ENCODE measurements at regions of chr3 and their contacts with region 1.

Region 1: DNA sequence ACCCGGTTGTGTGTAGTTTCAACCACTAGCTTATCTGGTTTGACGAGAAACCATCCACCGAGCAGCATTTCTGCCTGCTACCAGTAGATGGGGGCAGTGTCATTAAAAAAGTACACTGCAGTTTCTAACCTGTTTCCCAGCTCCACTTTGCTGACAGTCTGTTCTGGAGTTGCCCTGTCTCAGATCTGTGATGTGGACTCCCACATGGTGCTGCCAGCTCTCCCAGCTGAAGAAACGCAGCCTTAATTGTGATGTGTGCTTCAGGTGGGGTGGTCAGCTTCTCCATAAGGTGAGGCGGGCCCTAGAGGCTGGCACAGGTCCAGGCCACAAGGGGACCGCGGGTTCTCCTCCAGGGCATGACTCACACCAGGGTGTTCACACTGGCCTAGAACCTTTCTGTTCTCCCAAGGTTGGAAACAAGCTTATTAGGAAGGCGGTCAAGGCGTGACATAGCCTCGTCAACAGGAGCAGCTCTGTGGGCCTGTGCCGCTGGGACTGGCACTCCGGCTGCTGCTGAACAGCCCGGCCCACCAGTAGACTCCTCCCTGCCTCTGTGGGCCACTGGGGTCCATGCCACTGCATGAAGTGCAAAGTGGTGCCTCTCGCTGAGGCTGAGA is 2.9 kb upstream of the FAM43A start:
- DNase-seq: peak; percentile 81
- H3K4me3 ChIP-seq: peak overlapping the region in 1 of 2 experiments; percentile 25; a peak in 1 of 4 replicates
- H3K27ac ChIP-seq: peak overlapping the region in 1 of 2 experiments; percentile 26; a peak in 1 of 4 replicates
- H3K4me1 ChIP-seq: peaks cover 5 to 28% of the 10 kb centered on the region in 2 experiments; a peak in 1 of 4 replicates
- H3K27me3 ChIP-seq: no peaks in the 10 kb centered on the region
- CTCF ChIP-seq: peak; percentile 93
- EP300 ChIP-seq: no peak
- RAD21 ChIP-seq: peak; percentile 100

Region 2: DNA sequence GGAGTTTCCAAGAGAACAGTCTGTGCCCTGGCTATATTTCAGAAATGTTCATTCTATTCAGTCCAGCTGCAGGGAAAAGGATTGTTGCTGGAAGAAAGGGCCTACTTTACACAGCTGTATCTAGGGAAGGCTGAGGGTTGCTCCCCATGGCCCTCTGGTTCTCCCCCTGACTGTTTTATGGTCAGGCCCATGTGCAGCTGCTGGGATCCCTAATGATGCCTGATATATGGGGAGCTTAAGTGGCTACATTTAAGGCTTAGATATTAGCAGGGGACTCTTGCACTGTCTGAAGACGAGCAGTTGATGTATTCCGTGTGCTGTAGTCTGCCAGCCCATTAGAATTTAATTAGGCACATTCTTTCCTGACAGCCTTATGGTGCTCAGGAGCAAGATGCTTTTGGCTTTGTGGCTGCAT is 74.9 kb after region 1 on chr3:
- CTCF ChIA-PET with region 1: interaction called, 10 read pairs
- POLR2A ChIA-PET with region 1: no interaction called
- DNase-seq: peak; percentile 44
- H3K4me3 ChIP-seq: no peak overlapping the region
- H3K27ac ChIP-seq: peak overlapping the region in 1 of 2 experiments; percentile 68; a peak in 2 of 4 replicates
- H3K4me1 ChIP-seq: peaks cover 0 to 37% of the 10 kb centered on the region in 2 experiments; a peak in 2 of 4 replicates
- H3K27me3 ChIP-seq: peaks cover 10% of the 10 kb centered on the region; the same call in 1 of the 2 replicates
- CTCF ChIP-seq: no peak
- EP300 ChIP-seq: 0 out of 4 replicates have a peak, but pooled peaks of 1 of the 2 experiments have one; percentile 10
- RAD21 ChIP-seq: no peak

Region 3: GRCh38 chr3:195094171-195094921 is 411.5 kb after region 1 on chr3:
- CTCF ChIA-PET with region 1: interaction called, 10 read pairs
- POLR2A ChIA-PET with region 1: no interaction called
- DNase-seq: no peak
- H3K4me3 ChIP-seq: no peak overlapping the region
- H3K27ac ChIP-seq: no peak overlapping the region; a peak in 1 of 4 replicates
- H3K4me1 ChIP-seq: peaks cover 0 to 36% of the 10 kb centered on the region in 2 experiments; a peak in 1 of 4 replicates
- H3K27me3 ChIP-seq: no peaks in the 10 kb centered on the region
- CTCF ChIP-seq: no peak
- EP300 ChIP-seq: no peak
- RAD21 ChIP-seq: no peak

Region 4: DNA sequence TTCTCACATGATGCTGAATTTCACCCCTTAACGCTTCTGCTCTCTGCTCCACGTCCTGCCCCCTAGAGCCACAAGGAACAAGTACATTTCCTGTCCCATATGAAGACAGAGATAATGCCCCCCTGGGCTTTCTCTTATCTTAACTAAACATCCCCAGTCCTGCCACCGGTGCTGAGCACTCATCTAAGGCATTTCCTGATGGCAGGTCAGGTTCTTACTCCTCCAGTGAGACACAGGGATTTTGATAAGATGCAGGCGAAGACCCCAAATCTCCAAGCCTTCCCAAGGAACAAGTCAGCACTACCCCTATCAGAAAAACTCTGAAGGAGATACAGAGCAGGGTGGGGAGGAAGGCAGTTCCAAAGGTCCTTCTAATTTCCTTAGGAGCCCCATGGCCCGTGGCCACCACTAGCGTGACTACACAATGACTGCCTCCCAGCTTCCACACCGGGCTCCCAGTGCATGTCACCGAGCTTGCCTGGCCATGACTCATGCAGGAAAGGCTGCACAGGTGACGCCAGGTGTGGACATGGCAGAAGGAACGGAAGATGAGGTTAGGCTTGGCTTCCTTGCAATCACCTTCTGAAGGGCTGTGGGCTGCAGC is 435.3 kb after region 1 on chr3:
- CTCF ChIA-PET with region 1: interaction called, 20 read pairs
- POLR2A ChIA-PET with region 1: no interaction called
- DNase-seq: no peak
- H3K4me3 ChIP-seq: no peak overlapping the region
- H3K27ac ChIP-seq: no peak overlapping the region
- H3K4me1 ChIP-seq: peaks cover 5 to 14% of the 10 kb centered on the region in 2 experiments; a peak in 1 of 4 replicates
- H3K27me3 ChIP-seq: no peaks in the 10 kb centered on the region
- CTCF ChIP-seq: peak; percentile 27; the same call in 1 of the 2 replicates
- EP300 ChIP-seq: no peak
- RAD21 ChIP-seq: no peak

Region 5: GRCh38 chr3:195139091-195139839 is 456.5 kb after region 1 on chr3:
- CTCF ChIA-PET with region 1: interaction called, 11 read pairs
- POLR2A ChIA-PET with region 1: no interaction called
- DNase-seq: no peak
- H3K4me3 ChIP-seq: no peak overlapping the region
- H3K27ac ChIP-seq: no peak overlapping the region
- H3K4me1 ChIP-seq: peaks cover 0 to 48% of the 10 kb centered on the region in 2 experiments; a peak in 2 of 4 replicates
- H3K27me3 ChIP-seq: no peaks in the 10 kb centered on the region
- CTCF ChIP-seq: no peak
- EP300 ChIP-seq: no peak
- RAD21 ChIP-seq: no peak

Region 6: DNA sequence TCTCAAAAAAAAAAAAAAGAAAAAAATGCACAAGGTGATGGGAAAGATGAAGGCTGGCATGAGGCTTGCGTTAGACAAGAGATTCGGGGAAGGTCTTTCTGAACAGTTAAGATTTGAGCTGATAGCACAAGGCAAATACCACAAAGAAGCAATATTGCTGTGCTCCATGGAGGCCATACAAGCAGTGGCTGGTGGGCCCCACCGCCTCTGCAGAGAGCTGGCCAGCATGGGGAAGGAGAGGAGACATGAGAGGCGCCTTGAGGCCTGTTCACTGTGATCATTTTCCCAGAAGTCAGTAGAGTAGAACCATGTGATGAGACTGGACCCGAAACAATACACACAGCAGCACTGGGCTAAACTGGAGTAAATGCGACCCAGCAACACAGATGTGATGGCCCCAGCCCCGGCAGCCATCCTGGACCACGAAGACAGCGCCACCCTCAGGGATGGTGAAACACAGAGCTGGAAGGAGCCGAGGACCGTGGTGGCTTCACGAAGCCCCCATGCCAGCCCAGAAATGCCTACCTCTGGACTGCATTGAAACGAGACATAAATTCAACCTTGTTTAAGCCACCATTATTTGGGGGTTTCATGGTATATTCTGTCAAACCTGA is 582.7 kb after region 1 on chr3:
- CTCF ChIA-PET with region 1: interaction called, 50 read pairs
- POLR2A ChIA-PET with region 1: interaction called, 10 read pairs
- DNase-seq: no peak
- H3K4me3 ChIP-seq: no peak overlapping the region
- H3K27ac ChIP-seq: no peak overlapping the region
- H3K4me1 ChIP-seq: peaks cover 0 to 23% of the 10 kb centered on the region in 2 experiments; a peak in 2 of 4 replicates
- H3K27me3 ChIP-seq: no peaks in the 10 kb centered on the region
- CTCF ChIP-seq: no peak
- EP300 ChIP-seq: no peak
- RAD21 ChIP-seq: no peak